ENCODE measurements at regions of chr18 and their contacts with region 1.

Region 1: GRCh38 chr18:30457156-30457555 is 585.4 kb downstream of the DSC3 start:
- DNase-seq: no peak
- ATAC-seq: no peak
- H3K4me3 ChIP-seq: no peak overlapping the region
- H3K27ac ChIP-seq: no peak overlapping the region
- H3K4me1 ChIP-seq: no peaks in the 10 kb centered on the region
- H3K27me3 ChIP-seq: no peaks in the 10 kb centered on the region
- CTCF ChIP-seq: no peak

Region 2: GRCh38 chr18:30254331-30254730 is 202.8 kb before region 1 on chr18:
- intact Hi-C with region 1: no loop called
- DNase-seq: no peak
- ATAC-seq: no peak
- H3K4me3 ChIP-seq: no peak overlapping the region
- H3K27ac ChIP-seq: no peak overlapping the region
- H3K4me1 ChIP-seq: no peaks in the 10 kb centered on the region
- H3K27me3 ChIP-seq: no peaks in the 10 kb centered on the region
- CTCF ChIP-seq: no peak

Region 3: DNA sequence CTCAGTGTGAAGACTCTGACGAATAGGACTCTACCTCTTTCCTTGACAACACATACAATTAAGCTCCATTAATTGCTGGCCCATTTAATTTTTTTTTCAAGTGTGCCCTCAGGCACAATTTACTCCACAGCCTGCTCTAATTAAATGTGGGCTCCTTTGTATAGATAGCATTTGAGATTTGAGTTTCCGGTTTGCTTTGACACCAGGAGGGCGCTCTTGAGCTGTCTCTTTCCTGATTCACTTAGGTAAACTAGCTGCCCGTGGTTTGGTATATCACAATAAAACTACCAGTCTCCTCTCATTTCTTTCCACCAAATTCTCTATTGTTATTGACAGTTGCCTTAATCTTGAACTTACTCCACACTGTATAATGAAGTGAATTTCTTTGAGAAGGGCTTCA is 80.6 kb before region 1 on chr18:
- intact Hi-C with region 1: loop called in 1 of 10 experiments (anchors 10 kb)
- DNase-seq: no peak
- ATAC-seq: no peak
- H3K4me3 ChIP-seq: no peak overlapping the region
- H3K27ac ChIP-seq: no peak overlapping the region
- H3K4me1 ChIP-seq: no peaks in the 10 kb centered on the region
- H3K27me3 ChIP-seq: no peaks in the 10 kb centered on the region
- CTCF ChIP-seq: no peak

Measured in heart right ventricle (tissue), 16 donors.